Mammary epithelial cell (primary cell): ENCODE measurements at regions of chr6 and their contacts with region 1.

Region 1: GRCh38 chr6:169326067-169326799 is 72.6 kb upstream of the THBS2 start:
- DNase-seq: peak; percentile 52
- H3K4me3 ChIP-seq: no peak overlapping the region
- H3K27ac ChIP-seq: no peak overlapping the region
- H3K4me1 ChIP-seq: peaks cover 7% of the 10 kb centered on the region
- H3K27me3 ChIP-seq: no peaks in the 10 kb centered on the region
- CTCF ChIP-seq: peak; percentile 19 to 54

Region 2: GRCh38 chr6:169019727-169020491 is 306.3 kb before region 1 on chr6:
- CTCF ChIA-PET with region 1: no interaction called
- dilution Hi-C with region 1: no loop called
- in situ Hi-C with region 1: no loop called
- intact Hi-C with region 1: no loop called
- DNase-seq: no peak
- H3K4me3 ChIP-seq: no peak overlapping the region
- H3K27ac ChIP-seq: no peak overlapping the region
- H3K4me1 ChIP-seq: no peaks in the 10 kb centered on the region
- H3K27me3 ChIP-seq: no peaks in the 10 kb centered on the region
- CTCF ChIP-seq: peak; percentile 14 to 27

Region 3: GRCh38 chr6:169099411-169100202 is 226.6 kb before region 1 on chr6:
- CTCF ChIA-PET with region 1: no interaction called
- dilution Hi-C with region 1: no loop called
- in situ Hi-C with region 1: no loop called
- intact Hi-C with region 1: loop called (anchors 1 kb)
- DNase-seq: peak; percentile 35
- H3K4me3 ChIP-seq: no peak overlapping the region
- H3K27ac ChIP-seq: no peak overlapping the region
- H3K4me1 ChIP-seq: peaks cover 6% of the 10 kb centered on the region
- H3K27me3 ChIP-seq: no peaks in the 10 kb centered on the region
- CTCF ChIP-seq: peak; percentile 29 to 60

Region 4: GRCh38 chr6:169162752-169163591 is 163.3 kb before region 1 on chr6:
- CTCF ChIA-PET with region 1: no interaction called
- dilution Hi-C with region 1: no loop called
- in situ Hi-C with region 1: no loop called
- intact Hi-C with region 1: loop called (anchors 1 kb)
- DNase-seq: peak; percentile 95
- H3K4me3 ChIP-seq: no peak overlapping the region
- H3K27ac ChIP-seq: peak overlapping the region; percentile 43
- H3K4me1 ChIP-seq: peaks cover 22% of the 10 kb centered on the region
- H3K27me3 ChIP-seq: no peaks in the 10 kb centered on the region
- CTCF ChIP-seq: no peak

Region 5: DNA sequence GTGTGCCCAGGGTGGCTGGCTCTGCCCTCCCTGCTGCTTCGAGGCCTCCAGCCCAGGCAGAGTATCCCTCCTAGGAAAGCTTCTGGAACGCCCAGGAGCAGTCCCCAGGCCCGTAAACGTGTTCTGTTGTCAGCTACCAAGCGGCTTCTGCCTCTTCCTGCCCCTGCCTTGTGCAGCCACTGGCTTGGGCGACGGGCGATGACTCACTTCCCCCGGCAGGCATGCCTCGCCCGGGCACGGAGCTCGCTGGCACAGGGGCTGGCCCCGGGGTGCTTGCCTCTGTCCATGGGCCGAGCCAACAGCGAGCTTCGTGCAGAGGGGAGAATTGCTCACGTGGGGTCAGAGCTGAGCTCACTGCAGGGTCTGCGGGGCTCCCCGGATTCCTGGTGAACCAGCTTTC is 14.2 kb after region 1 on chr6:
- CTCF ChIA-PET with region 1: no interaction called
- dilution Hi-C with region 1: no loop called
- in situ Hi-C with region 1: no loop called
- intact Hi-C with region 1: no loop called
- DNase-seq: peak; percentile 79
- H3K4me3 ChIP-seq: no peak overlapping the region
- H3K27ac ChIP-seq: peak overlapping the region; percentile 66
- H3K4me1 ChIP-seq: peaks cover 58% of the 10 kb centered on the region
- H3K27me3 ChIP-seq: no peaks in the 10 kb centered on the region
- CTCF ChIP-seq: no peak